Heart right ventricle (tissue), 16 donors: ENCODE measurements at regions of chr7 and their contacts with region 1.

Region 1: DNA sequence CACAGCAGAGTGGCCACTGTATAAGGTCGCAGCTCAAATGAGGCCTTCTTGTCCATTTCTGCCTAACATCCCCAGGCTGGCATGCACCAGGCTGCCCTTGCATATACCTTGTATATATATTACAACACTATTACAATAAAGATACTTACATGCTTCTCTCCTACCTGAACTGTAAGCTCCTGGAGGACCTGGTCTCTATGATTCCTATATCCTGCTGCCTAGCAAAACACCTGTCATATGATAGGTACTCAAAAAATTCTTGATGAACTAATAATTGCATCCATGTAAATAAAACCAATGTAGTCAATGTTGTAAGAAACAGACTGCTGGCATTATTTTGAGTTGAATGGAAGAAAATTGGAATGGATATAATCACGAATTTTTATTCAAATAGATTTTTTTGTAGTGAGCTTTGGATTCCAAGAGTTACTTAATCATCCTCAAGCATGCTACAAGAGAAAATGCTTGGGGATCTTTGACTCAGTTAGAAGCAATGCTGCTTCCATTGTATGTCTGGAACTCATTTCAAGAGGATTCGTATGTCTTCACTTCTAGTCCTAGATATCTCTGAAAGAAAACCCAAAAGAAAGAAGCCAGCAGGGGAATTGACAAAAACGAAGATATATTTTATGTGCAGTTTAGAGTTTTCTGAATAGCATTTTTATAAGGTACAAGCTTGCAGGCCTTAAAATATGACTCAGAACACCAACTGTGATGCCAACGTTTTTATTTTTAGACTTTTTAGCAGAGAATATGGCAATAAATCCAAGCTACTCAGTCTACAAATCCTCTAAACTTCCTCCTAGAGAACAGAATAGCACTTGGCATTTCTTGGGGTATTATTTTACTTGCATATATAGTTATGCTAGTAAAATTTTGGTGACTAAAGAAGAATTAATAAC is 53.1 kb downstream of the OSBPL3 start:
- DNase-seq: no peak
- ATAC-seq: no peak
- H3K4me3 ChIP-seq: no peak overlapping the region
- H3K27ac ChIP-seq: no peak overlapping the region
- H3K4me1 ChIP-seq: peaks cover 0 to 27% (median 18%) of the 10 kb centered on the region in 9 donors
- H3K27me3 ChIP-seq: no peaks in the 10 kb centered on the region
- CTCF ChIP-seq: no peak

Region 2: DNA sequence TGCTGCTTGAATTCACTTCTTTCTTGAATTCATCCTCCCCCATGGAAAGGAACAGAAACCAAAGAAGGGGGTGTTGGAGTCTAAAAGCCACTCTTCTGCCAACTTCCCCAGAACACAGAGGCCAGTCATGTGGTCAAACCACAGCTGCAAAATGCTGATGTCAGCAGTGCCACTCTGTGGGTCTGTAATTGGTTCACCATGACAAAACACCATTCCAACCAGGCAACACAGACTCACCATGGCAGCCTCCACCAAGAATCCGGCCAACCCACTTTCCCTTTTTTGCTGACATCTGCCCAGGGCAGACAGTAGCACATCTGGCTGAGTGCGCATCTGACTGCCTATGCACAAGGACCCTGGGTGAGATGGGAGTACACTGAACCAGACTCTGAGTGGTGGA is 36.3 kb after region 1 on chr7:
- intact Hi-C with region 1: loop called in 1 of 10 experiments (anchors 1 kb)
- DNase-seq: peak; percentile 17 to 47
- ATAC-seq: peak in 7 of 8 donors; percentile 58 to 86 (median 81)
- H3K4me3 ChIP-seq: no peak overlapping the region
- H3K27ac ChIP-seq: peak overlapping the region in 1 of 10 donors; percentile 69
- H3K4me1 ChIP-seq: peaks cover 0 to 47% (median 0%) of the 10 kb centered on the region in 9 donors
- H3K27me3 ChIP-seq: no peaks in the 10 kb centered on the region
- CTCF ChIP-seq: no peak

Region 3: DNA sequence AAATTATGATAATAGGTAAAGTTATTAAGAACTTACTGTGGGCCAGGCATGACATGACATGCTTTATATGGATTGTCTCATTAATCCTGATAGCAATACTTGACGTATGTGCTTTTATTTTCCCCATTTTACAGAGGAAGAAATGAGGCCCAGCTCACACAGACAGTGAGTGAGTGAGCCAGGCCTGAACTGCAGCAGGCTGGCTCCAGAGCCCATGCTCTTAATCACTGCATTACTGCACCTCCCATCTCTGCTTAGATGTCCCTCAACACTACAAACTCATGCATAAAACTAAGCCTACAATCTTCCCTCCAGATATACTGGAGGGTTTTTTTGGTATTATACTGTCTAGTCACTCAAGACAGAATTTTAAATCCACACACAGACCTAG is 121.6 kb after region 1 on chr7:
- intact Hi-C with region 1: no loop called
- DNase-seq: no peak
- ATAC-seq: no peak
- H3K4me3 ChIP-seq: no peak overlapping the region
- H3K27ac ChIP-seq: no peak overlapping the region
- H3K4me1 ChIP-seq: no peaks in the 10 kb centered on the region
- H3K27me3 ChIP-seq: no peaks in the 10 kb centered on the region
- CTCF ChIP-seq: no peak